ENCODE measurements at regions of chr9 and their contacts with region 1.

Region 1: DNA sequence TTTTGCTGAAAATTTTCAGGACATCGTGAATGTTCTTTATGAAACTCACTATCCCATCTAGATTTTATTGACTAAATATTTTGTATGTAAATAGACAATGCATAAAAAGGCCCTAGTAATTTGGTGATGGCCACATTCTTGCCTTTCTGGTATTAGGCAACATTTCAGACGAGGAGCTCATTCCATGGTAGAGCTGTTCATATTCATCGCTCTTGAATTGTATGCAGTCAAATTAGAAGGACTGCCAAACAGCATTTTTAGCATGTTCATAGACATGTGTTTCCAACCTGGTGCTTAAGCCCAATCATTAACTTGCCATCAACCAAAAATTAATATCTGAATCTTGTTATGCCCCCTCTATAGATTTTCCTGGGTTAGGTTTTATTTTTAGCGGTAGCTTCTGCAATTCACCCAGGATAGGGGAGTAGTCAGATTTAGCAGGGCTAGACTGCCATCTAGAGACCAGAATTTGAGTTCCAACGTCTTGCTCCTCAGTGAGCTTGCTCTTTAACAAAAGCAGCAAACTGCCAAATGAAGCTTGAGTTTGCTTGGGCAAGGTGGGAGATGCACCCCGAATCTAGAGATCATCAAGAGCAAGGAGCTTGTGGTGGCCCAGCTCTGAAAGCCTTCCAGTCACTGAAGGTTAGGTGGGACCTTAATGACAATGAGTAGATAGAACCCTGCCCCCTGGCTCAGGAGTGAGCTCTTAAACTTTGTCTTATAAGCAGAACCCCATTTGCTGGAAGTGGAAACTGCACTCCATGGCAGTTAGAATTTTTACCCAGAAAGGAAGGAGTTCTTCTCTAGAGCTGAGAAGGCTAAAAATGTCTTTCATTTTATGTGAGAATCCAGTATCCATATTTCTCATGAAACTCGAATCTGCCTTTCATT is 456.2 kb downstream of the RASEF start:
- DNase-seq: peak; percentile 57
- H3K4me3 ChIP-seq: no peak overlapping the region
- H3K27ac ChIP-seq: no peak overlapping the region
- H3K4me1 ChIP-seq: no peaks in the 10 kb centered on the region
- H3K27me3 ChIP-seq: no peaks in the 10 kb centered on the region
- CTCF ChIP-seq: peak; percentile 22 to 32
- POLR2A ChIP-seq: no peak

Region 2: GRCh38 chr9:81312337-81312736 is 1294.4 kb before region 1 on chr9:
- CTCF ChIA-PET with region 1: interaction called, 9 read pairs
- POLR2A ChIA-PET with region 1: no interaction called
- dilution Hi-C with region 1: no loop called
- intact Hi-C with region 1: loop called (anchors 5 kb)
- DNase-seq: peak; percentile 32
- H3K4me3 ChIP-seq: no peak overlapping the region
- H3K27ac ChIP-seq: no peak overlapping the region
- H3K4me1 ChIP-seq: no peaks in the 10 kb centered on the region
- H3K27me3 ChIP-seq: no peaks in the 10 kb centered on the region
- CTCF ChIP-seq: peak in 1 of 2 donors; percentile 9
- POLR2A ChIP-seq: no peak

Region 3: GRCh38 chr9:81335879-81336421 is 1270.8 kb before region 1 on chr9:
- CTCF ChIA-PET with region 1: no interaction called
- POLR2A ChIA-PET with region 1: no interaction called
- dilution Hi-C with region 1: no loop called
- intact Hi-C with region 1: no loop called
- DNase-seq: no peak
- H3K4me3 ChIP-seq: no peak overlapping the region
- H3K27ac ChIP-seq: no peak overlapping the region
- H3K4me1 ChIP-seq: peaks cover 6% of the 10 kb centered on the region
- H3K27me3 ChIP-seq: no peaks in the 10 kb centered on the region
- CTCF ChIP-seq: no peak
- POLR2A ChIP-seq: no peak

Region 4: DNA sequence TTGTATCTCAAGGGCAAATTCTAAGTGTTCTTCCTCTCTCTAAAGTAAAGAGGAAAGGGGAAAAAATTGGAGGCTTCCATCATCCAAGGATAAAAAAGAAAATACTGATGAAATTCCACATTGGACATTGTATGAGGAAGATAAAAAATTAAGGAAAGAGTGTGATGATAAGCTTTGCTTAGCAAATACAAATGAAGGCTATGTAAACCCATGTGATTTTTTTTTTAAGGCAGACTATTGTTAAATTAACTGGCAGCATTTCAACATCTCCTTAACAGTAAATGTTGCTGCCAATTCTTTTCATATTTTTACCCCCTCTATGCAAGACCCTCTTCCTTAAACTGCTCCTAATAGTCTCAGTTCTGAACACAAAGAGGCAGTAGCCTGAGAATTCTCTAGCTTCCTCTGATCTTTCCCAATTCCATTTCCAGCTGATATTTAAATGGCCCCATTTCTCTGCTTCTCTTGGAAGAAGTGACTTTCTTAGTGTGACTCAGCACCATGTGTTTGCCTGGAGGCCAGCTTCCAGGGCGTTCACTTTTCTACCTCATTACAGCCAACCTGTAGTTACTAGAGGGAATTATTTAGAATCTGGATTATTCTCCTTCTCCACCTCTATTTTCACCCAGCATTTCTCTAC is 1077.1 kb before region 1 on chr9:
- CTCF ChIA-PET with region 1: no interaction called
- POLR2A ChIA-PET with region 1: no interaction called
- dilution Hi-C with region 1: no loop called
- intact Hi-C with region 1: loop called (anchors 10 kb)
- DNase-seq: peak; percentile 89
- H3K4me3 ChIP-seq: no peak overlapping the region
- H3K27ac ChIP-seq: peak overlapping the region; percentile 15
- H3K4me1 ChIP-seq: peaks cover 10% of the 10 kb centered on the region
- H3K27me3 ChIP-seq: no peaks in the 10 kb centered on the region
- CTCF ChIP-seq: no peak
- POLR2A ChIP-seq: no peak

Region 5: DNA sequence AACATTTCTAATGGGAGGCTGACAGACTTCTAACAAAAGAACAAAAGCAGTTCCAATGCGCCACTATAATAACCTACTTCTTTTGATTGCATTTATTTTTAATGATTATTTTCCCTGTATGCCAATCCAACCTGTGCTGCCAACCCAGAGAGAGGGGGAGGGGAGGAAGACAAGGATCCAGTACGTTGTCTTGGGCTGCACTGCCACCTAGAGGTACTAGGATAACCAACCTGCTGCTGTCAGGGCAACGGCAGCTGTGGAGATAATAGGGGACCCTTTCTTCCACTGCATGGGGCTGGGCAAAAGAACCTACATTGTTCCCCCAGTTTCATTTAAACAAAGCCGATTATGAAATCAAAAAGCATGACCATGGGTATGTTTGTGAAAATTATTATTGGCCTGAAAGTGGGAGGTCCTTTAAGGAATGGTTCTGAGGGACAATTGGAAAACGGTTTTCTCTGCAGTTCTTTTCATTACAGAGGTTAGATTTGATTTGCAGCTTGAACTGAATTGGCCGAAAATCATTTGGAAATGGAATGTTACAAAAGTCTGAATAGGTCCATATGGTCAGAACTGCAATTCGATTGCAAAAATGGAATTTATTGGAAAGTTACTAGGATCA is 354.9 kb after region 1 on chr9:
- CTCF ChIA-PET with region 1: interaction called, 3 read pairs
- POLR2A ChIA-PET with region 1: no interaction called
- dilution Hi-C with region 1: no loop called
- intact Hi-C with region 1: loop called (anchors 5 kb)
- DNase-seq: peak; percentile 74
- H3K4me3 ChIP-seq: no peak overlapping the region
- H3K27ac ChIP-seq: no peak overlapping the region
- H3K4me1 ChIP-seq: no peaks in the 10 kb centered on the region
- H3K27me3 ChIP-seq: peaks cover 0 to 4% of the 10 kb centered on the region in 2 experiments
- CTCF ChIP-seq: peak; percentile 75 to 81
- POLR2A ChIP-seq: no peak